Aorta (tissue), 5 donors: ENCODE measurements at regions of chr12 and their contacts with region 1.

Region 1: GRCh38 chr12:50084775-50085614 is at the start of gene SMARCD1:
- DNase-seq: peak; percentile 92 to 97
- ATAC-seq: peak; percentile 94
- H3K4me3 ChIP-seq: peak within 1 kb of the TSS; percentile 88
- H3K27ac ChIP-seq: peak within 1 kb of the TSS; percentile 84 to 99
- H3K4me1 ChIP-seq: no peaks in the 10 kb centered on the region
- H3K27me3 ChIP-seq: no peaks in the 10 kb centered on the region
- total RNA-seq, gene SMARCD1: 41.0 to 44.6 TPM

Region 2: DNA sequence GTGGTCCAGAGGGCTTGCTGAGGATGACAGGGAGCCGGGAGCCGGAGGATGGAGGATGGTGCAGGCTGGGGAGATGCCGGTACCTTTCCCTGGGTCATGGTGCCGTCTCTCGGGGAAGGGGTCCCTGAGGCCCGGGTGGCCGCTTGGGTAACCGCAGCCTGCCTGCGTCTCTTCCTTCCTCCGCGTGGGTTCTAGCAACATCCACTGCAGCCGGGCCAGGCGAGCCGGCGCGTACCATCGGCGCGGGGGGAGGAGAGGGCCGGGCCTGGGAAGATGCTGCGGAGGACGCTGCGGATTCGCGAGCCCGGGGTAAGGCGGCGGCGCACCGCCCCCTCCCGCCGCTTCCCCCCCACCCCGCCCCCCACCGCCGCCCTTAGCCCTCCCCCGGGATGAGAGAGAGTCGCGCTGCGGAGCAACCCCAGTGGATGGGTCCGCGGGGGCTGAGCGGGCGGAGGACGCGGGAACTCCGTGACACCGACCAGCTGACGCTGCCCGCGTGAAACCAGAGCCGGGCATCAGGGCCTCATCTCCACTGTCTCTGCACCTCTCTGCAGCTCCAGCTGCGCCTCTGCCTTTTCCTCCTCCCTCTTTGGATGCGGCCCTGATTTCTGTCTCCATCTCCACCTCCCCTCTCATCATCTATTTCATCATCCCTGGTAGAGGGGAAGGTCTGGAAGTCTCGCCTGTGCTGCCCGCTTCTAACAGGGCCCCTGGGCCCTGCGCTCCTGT is 181.1 kb before region 1 on chr12 and contains the start of gene FAIM2:
- intact Hi-C with region 1: no loop called
- DNase-seq: peak; percentile 71 to 85
- ATAC-seq: peak; percentile 76
- H3K4me3 ChIP-seq: peak within 1 kb of the TSS; percentile 3 to 41
- H3K27ac ChIP-seq: no peak within 1 kb of the TSS
- H3K4me1 ChIP-seq: no peaks in the 10 kb centered on the region
- H3K27me3 ChIP-seq: no peaks in the 10 kb centered on the region
- total RNA-seq, gene FAIM2: 0.58 to 16.4 TPM

Region 3: DNA sequence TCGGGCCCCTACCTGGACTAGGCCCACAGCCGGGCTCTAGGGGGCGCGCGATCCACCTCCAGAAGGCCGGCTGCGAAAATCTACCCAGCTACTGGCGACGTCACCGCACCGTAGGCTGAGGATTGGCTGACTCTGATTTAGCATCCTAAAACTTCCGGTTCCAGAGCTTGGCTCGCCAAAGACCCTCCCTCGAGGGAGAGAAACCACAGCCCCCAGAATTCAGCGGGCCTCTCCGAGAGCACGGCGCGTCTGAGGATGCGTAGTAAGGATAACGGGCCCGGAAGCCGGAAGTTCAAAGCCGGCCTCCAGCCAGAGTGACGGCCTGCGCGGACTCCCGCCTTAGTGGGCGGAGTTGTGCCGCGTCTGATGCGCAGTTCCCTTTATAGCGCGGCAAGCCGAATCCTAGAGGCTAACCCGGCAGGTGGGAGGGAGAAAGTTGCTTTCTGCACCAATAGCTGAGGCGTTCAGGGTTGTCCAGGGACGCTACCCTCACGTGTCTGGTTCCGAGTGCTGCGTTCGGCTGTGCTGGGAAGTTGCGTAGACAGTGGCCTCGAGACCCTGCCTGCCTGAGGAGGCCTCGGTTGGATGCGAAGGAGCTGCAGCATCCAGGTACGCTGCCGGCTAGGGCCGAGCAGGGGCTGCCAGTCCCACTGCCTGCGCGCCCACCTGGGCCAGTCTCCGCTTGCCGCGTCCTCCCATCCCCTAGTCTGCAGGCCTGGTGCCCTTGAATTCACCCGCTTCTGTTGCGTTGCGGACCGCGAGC is 26.9 kb after region 1 on chr12 and contains the start of gene COX14:
- intact Hi-C with region 1: loop called in 1 of 2 experiments (anchors 2 kb)
- DNase-seq: peak; percentile 99
- ATAC-seq: peak; percentile 96
- H3K4me3 ChIP-seq: peak within 1 kb of the TSS; percentile 45 to 68
- H3K27ac ChIP-seq: peak within 1 kb of the TSS; percentile 87 to 94
- H3K4me1 ChIP-seq: peaks cover 0 to 2% of the 10 kb centered on the region in 2 donors
- H3K27me3 ChIP-seq: no peaks in the 10 kb centered on the region
- total RNA-seq, gene COX14: 49.3 to 52.7 TPM

Region 4: GRCh38 chr12:50167041-50167828 is 82.2 kb after region 1 on chr12 and contains the start of gene CERS5:
- intact Hi-C with region 1: loop called (anchors 5 kb)
- DNase-seq: peak; percentile 99
- ATAC-seq: peak; percentile 99
- H3K4me3 ChIP-seq: peak within 1 kb of the TSS; percentile 46 to 73
- H3K27ac ChIP-seq: peak within 1 kb of the TSS; percentile 29 to 65
- H3K4me1 ChIP-seq: no peaks in the 10 kb centered on the region
- H3K27me3 ChIP-seq: no peaks in the 10 kb centered on the region
- total RNA-seq, gene CERS5: 62.8 to 66.6 TPM

Region 5: GRCh38 chr12:50174971-50175715 is 90.1 kb after region 1 on chr12:
- intact Hi-C with region 1: loop called in 1 of 2 experiments (anchors 5 kb)
- DNase-seq: no peak
- ATAC-seq: peak; percentile 67
- H3K4me3 ChIP-seq: no peak overlapping the region
- H3K27ac ChIP-seq: no peak overlapping the region
- H3K4me1 ChIP-seq: no peaks in the 10 kb centered on the region
- H3K27me3 ChIP-seq: no peaks in the 10 kb centered on the region

Region 6: DNA sequence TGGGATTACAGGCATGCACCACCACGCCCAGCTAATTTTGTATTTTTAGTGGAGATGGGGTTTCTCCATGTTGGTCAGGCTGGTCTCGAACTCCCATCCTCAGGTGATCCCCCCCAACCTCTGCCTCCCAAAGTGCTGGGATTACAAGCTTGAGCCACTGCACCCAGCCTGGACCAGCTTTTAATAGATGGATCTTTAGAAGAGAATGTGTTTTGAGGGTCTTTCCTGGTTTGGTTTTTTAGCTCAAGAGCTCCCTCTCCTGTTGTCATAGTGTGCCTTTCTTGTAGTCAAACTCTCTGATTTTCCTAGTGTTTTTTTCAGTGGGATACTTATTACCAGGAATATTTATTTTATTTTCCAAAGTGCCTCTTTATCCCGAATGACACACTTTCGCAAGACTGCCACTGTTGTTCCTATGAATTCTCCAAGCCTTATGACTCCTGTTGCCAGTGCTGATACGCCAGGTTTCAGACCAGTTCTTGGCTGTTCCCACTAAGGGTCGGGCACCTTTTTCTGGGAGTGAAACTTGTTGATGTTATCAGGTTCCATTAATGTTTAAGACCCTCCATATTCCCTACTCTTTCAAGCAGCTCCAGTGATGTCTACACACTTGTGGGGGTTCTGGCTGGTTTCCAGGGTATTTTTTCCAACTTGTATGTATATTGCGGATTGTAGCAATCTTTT is 229.8 kb after region 1 on chr12:
- intact Hi-C with region 1: loop called in 1 of 2 experiments (anchors 10 kb)
- DNase-seq: no peak
- ATAC-seq: no peak
- H3K4me3 ChIP-seq: no peak overlapping the region
- H3K27ac ChIP-seq: no peak overlapping the region
- H3K4me1 ChIP-seq: no peaks in the 10 kb centered on the region
- H3K27me3 ChIP-seq: no peaks in the 10 kb centered on the region